Activated CD8-positive, alpha-beta memory T cell treated with anti-CD3 and anti-CD28 coated beads, Interleukin-2, amount 10 ng/mL, durations not matched to agents 7 days and 5 days (primary cell): ENCODE measurements at regions of chr16 and their contacts with region 1.

Region 1: DNA sequence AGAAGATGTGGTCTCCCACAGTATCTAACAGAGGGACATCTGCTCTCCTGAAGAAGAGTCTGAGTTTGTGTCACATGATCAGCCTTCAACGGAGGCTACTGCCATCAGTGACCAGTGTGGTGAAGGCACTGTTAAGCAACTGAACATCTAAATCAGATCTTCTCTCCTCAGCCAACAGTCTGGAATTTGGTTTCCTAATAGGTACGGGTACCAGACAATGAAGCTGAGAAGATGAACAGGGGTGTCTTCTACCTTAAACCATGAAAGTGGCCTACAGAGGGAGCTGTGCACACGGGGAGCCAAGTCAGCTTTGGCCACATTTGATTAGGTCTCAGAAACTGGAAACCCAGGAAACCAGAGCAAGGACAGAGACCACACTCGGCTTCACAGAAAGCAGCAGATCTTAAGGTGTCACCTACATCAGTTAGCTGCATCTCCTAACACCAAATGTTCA is 41.8 kb downstream of the BRD7 start:
- DNase-seq: peak; percentile 88
- ATAC-seq: peak; percentile 97
- H3K4me3 Mint-ChIP-seq: no peak overlapping the region
- H3K27ac Mint-ChIP-seq: peak overlapping the region; percentile 69
- H3K4me1 Mint-ChIP-seq: peaks cover 50% of the 10 kb centered on the region
- H3K27me3 Mint-ChIP-seq: no peaks in the 10 kb centered on the region

Region 2: GRCh38 chr16:50266337-50267091 is 60.5 kb before region 1 on chr16 and contains the start of gene ADCY7:
- CTCF ChIA-PET with region 1: interaction called, 19 read pairs
- DNase-seq: peak; percentile 93
- ATAC-seq: peak; percentile 85
- H3K4me3 Mint-ChIP-seq: peak within 1 kb of the TSS; percentile 97
- H3K27ac Mint-ChIP-seq: peak within 1 kb of the TSS; percentile 99
- H3K4me1 Mint-ChIP-seq: peaks cover 80% of the 10 kb centered on the region
- H3K27me3 Mint-ChIP-seq: no peaks in the 10 kb centered on the region
- total RNA-seq, gene ADCY7: 131 to 232 TPM

Region 3: DNA sequence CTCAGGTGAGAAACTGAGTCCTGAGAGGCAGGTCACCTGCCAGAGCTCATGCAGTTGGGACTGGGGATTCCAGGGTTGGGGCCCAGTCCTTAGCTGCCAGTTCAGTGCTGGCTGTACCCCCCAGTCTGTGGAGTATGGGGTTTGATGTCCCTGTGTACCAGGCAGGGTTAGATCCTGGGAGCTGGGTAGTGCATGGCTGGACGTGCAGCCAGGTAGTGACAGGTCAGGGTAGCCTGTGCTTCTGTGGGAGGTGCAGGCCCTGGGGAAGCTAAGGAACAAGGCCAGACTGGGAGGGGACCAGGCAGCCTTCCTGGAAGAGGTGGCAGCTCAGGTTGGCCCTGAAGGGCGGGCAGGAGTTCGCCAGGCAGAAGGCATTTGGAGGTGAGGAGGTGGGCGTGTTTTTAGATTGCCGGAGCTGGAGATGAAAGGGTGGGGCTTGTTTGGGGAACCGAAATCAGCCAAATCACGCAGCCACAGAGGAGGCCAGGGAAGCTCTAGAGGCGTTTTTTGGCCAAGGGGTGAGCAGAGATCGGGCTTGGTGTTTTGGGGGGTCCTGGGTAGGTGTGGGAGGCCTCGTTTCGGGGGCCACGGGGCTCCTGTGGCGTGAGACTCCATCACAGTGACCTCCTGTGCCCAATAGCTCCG is 53.2 kb before region 1 on chr16:
- CTCF ChIA-PET with region 1: interaction called, 19 read pairs
- DNase-seq: peak; percentile 74
- ATAC-seq: peak; percentile 48
- H3K4me3 Mint-ChIP-seq: peak overlapping the region; percentile 82
- H3K27ac Mint-ChIP-seq: peak overlapping the region; percentile 98
- H3K4me1 Mint-ChIP-seq: peaks cover 94% of the 10 kb centered on the region
- H3K27me3 Mint-ChIP-seq: no peaks in the 10 kb centered on the region

Region 4: DNA sequence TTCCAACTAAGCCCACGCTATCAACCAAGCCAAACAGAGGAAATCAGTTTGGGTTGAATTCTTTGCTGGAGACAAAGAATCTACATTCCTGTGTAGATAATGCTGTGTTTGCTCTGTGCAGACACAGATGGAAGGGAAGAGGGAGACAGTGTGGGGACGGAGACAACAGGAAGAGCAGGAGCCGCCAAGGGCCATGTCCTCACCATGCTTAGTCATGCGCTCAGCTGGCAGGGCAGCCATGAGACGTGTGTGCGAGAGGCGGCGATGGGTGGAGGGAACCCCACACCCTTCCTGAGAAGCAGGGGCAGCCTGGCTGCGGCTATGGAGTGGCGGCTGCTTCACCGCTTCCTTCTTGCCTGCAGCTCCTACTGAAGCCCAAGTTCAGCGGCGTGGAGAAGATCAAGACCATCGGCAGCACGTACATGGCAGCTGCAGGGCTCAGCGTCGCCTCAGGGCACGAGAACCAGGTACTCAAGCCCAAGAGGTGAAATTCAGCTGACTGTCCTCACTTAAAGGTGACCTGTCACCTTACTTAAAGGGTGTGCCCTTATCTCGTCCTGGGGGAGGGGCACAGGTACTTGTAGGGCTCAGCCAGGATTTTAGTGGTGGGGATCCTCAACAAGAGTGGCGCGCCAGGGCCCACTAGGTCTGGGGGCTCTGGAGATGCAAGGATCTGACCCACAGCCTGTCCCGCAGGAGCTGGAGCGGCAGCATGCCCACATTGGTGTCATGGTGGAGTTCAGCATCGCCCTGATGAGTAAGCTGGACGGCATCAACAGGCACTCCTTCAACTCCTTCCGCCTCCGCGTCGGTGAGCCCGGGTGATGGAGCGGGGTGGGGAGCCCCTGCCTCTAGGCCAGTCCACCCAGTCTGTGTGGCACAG is 13.1 kb before region 1 on chr16:
- CTCF ChIA-PET with region 1: interaction called, 15 read pairs
- DNase-seq: peak; percentile 64
- ATAC-seq: peak; percentile 60
- H3K4me3 Mint-ChIP-seq: no peak overlapping the region
- H3K27ac Mint-ChIP-seq: peak overlapping the region; percentile 34
- H3K4me1 Mint-ChIP-seq: peaks cover 19% of the 10 kb centered on the region
- H3K27me3 Mint-ChIP-seq: no peaks in the 10 kb centered on the region

Region 5: DNA sequence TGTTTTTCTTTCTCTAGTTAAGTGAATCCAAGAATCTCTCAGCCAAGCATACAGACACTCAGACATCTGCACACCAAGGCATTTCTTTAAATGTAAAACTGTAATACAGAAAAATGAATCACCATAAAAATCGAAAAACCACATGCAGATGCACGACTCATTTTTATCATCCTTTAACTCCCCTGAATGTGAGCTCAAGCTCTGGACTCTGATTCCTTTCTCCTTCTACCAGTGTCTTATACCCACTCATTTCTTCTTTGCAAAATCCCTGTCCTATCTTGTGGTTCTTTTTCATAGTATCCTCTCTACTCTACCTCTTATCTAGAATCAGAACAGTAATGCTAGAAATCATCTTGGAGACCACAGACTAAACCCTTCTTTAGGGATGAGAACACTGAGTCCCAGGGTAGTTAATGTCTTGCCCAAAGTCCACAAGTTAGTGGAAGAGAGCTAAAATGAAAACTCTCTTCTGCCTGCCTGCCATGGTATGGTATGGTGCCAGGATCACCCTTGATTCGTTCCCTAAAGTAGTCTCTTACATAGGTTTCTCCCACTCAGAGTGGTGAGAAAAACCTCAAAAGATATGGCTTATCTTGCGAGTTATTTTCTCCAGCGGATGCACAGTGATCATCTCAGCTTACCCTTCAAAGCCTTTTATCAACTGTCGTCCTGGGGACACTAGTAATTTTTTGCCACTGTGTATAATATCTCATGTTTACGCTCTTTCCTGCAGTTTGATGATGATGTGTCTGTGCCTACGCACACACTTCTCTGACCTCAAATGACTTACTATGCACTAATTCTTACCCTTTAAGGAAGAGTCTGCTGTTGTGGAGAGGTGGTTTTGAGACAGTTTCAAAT is 11.6 kb after region 1 on chr16:
- CTCF ChIA-PET with region 1: interaction called, 20 read pairs
- DNase-seq: no peak
- ATAC-seq: peak; percentile 45
- H3K4me3 Mint-ChIP-seq: peak overlapping the region; percentile 10
- H3K27ac Mint-ChIP-seq: peak overlapping the region; percentile 70
- H3K4me1 Mint-ChIP-seq: peaks cover 37% of the 10 kb centered on the region
- H3K27me3 Mint-ChIP-seq: no peaks in the 10 kb centered on the region

Region 6: GRCh38 chr16:50354629-50355456 is 27.9 kb after region 1 on chr16:
- CTCF ChIA-PET with region 1: interaction called, 105 read pairs
- DNase-seq: no peak
- ATAC-seq: no peak
- H3K4me3 Mint-ChIP-seq: no peak overlapping the region
- H3K27ac Mint-ChIP-seq: no peak overlapping the region
- H3K4me1 Mint-ChIP-seq: peaks cover 11% of the 10 kb centered on the region
- H3K27me3 Mint-ChIP-seq: no peaks in the 10 kb centered on the region